Right cardiac atrium (tissue), 5 donors: ENCODE measurements at regions of chr15 and their contacts with region 1.

Region 1: DNA sequence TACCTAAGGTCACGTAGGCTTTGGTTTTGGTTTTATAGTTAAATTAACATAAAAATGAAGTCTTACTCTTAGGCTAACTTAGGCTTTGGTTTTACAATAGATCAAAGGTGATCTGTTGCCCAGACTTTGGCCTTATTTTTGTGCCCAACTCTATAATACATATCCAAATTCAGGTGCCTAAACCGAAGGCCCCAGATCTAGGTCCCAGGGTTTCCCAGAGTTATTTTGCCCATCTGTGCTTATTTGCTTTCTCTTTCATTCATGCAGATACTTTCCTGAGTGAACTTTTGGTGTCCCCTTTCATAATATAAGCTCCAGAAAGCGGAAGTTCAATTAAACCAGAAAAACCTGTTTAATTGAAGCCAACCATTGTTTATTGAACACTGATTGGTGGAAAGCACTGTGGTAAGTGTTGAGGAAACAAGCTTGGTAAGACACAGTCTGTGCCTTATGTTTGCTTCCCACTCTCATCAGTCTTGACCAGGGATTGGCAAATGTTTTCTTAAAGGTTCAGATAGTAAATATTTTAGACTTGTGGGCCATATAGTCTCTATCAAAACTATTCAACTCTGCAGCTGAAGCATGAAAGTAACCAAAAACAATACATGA is 209.7 kb downstream of the WDR72 start:
- DNase-seq: no peak
- ATAC-seq: no peak
- H3K4me3 ChIP-seq: no peak overlapping the region
- H3K27ac ChIP-seq: no peak overlapping the region
- H3K4me1 ChIP-seq: no peaks in the 10 kb centered on the region
- H3K27me3 ChIP-seq: no peaks in the 10 kb centered on the region

Region 2: GRCh38 chr15:53490341-53490740 is 59.5 kb before region 1 on chr15:
- intact Hi-C with region 1: loop called in 1 of 4 experiments (anchors 10 kb)
- DNase-seq: no peak
- ATAC-seq: no peak
- H3K4me3 ChIP-seq: no peak overlapping the region
- H3K27ac ChIP-seq: no peak overlapping the region
- H3K4me1 ChIP-seq: no peaks in the 10 kb centered on the region
- H3K27me3 ChIP-seq: no peaks in the 10 kb centered on the region

Region 3: DNA sequence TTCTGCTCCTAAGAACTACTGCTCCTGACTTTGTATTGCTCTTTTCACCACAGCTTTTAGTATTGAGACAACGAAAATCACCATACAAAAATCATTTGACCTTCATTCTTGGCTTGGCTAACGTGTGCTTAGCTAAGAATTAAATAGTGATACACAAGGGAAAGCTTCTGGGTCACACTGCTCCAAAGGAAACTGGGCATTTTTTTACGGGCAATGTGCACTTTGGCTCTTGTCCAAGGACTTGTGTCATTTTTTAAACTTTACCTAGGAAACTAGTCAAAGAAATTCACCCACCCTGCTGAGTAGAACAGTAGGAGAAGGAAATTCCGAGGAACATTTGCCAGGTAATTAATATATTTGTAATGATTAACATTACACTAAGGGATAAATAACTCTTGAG is 189.8 kb after region 1 on chr15:
- intact Hi-C with region 1: no loop called
- DNase-seq: no peak
- ATAC-seq: no peak
- H3K4me3 ChIP-seq: no peak overlapping the region
- H3K27ac ChIP-seq: no peak overlapping the region
- H3K4me1 ChIP-seq: no peaks in the 10 kb centered on the region
- H3K27me3 ChIP-seq: no peaks in the 10 kb centered on the region